ENCODE measurements at regions of chr4 and their contacts with region 1.

Region 1: DNA sequence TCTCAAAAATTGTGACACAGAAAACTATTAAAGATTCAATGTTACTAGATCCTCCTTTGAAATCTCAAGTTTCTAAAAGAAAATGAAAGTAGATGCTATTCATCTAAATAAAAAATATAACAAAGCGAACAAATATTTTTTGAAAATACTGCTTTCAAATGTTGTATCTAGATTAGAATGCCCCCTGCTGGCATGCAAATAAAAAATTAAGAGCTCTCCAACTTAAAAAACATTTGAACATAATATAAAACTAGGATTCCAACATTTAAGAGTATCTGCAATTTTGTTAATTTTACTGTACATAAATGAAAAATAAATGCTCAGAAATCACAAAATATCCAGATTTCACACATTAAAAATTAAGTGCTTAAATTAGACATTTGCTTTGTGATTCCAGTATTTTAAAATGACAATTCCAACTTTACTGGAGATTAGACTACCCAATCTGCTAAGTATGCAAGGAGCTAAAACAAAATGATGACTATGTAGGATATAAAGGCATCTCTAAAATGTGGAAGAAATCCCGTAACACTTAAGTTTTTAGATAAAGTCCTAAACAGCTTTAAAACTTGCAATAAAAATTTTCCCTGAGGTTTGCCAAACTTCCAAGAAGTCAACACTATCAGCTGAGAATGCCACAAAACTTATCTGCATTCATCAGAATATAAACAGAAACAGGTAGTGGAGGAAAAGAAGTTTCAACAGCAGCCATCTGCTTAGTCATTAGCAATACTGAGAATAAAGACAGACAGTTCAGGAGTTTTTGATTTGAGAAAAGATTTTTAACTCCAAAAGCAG is 32.7 kb downstream of the DHX15 start:
- DNase-seq: no peak
- H3K4me3 ChIP-seq: peak overlapping the region in 1 of 2 experiments; percentile 4; a peak in 1 of 4 replicates
- H3K27ac ChIP-seq: peak overlapping the region; percentile 12 to 28; a peak in 3 of 4 replicates
- H3K4me1 ChIP-seq: peaks cover 3 to 19% of the 10 kb centered on the region in 2 experiments; a peak in 3 of 4 replicates
- H3K27me3 ChIP-seq: no peaks in the 10 kb centered on the region
- CTCF ChIP-seq: peak; percentile 73
- EP300 ChIP-seq: no peak
- RAD21 ChIP-seq: no peak; the same call in 1 of the 2 replicates

Region 2: DNA sequence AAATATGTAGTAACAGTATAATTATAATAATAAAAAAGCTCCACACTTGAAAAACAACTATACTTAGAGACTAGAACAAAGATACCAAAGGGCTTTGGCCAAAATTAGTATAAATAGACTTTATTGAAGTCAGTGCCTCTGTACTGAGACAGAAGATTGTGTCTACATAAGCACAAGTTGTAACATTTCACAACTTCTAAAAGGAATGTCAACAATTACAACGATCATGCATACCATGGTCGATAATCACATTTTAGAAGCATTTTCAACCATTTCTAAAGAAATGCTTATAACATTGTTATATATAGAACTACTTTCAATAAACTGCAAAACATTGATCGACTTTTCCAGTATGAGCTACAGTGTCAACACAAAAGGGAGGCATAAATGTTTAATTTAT is 24.3 kb before region 1 on chr4:
- CTCF ChIA-PET with region 1: interaction called, 18 read pairs
- POLR2A ChIA-PET with region 1: no interaction called
- DNase-seq: no peak
- H3K4me3 ChIP-seq: no peak overlapping the region
- H3K27ac ChIP-seq: no peak overlapping the region
- H3K4me1 ChIP-seq: no peaks in the 10 kb centered on the region
- H3K27me3 ChIP-seq: no peaks in the 10 kb centered on the region
- CTCF ChIP-seq: no peak
- EP300 ChIP-seq: no peak
- RAD21 ChIP-seq: no peak

Region 3: GRCh38 chr4:24537025-24537424 is 14.7 kb before region 1 on chr4:
- CTCF ChIA-PET with region 1: interaction called, 22 read pairs
- POLR2A ChIA-PET with region 1: no interaction called
- DNase-seq: no peak
- H3K4me3 ChIP-seq: no peak overlapping the region
- H3K27ac ChIP-seq: no peak overlapping the region
- H3K4me1 ChIP-seq: no peaks in the 10 kb centered on the region; a peak in 1 of 4 replicates
- H3K27me3 ChIP-seq: no peaks in the 10 kb centered on the region
- CTCF ChIP-seq: no peak
- EP300 ChIP-seq: no peak
- RAD21 ChIP-seq: no peak

Region 4: DNA sequence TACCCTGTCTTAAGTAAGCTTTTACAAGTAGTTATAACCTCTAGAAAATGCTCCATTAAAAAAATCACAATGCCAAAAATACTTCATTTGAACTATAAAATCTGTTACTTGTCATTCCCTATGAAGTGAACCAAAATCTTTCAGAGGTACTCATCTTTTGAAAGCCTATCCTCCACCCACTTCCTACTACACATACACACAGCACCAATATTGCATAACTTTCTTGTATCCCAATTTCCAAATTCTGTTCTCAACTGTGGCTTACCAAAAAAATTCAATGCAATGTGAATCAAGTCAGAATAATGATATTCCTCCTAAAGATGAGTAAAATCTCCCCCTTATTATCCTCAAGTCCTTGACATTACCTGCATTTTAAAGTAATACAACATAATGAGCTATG is 16.7 kb after region 1 on chr4:
- CTCF ChIA-PET with region 1: interaction called, 14 read pairs
- POLR2A ChIA-PET with region 1: interaction called, 3 read pairs
- DNase-seq: no peak
- H3K4me3 ChIP-seq: no peak overlapping the region
- H3K27ac ChIP-seq: no peak overlapping the region
- H3K4me1 ChIP-seq: peaks cover 2 to 4% of the 10 kb centered on the region in 2 experiments; a peak in 3 of 4 replicates
- H3K27me3 ChIP-seq: no peaks in the 10 kb centered on the region
- CTCF ChIP-seq: no peak
- EP300 ChIP-seq: no peak
- RAD21 ChIP-seq: no peak

Measured in SK-N-SH (cell line).